ENCODE measurements at regions of chr6 and their contacts with region 1.

Region 1: GRCh38 chr6:132279592-132280139 is 121.6 kb downstream of the MOXD1 start:
- DNase-seq: peak; percentile 85
- ATAC-seq: peak; percentile 84

Region 2: GRCh38 chr6:132483779-132484679 is 204.4 kb after region 1 on chr6:
- intact Hi-C with region 1: loop called (anchors 10 kb)
- DNase-seq: no peak
- ATAC-seq: peak; percentile 90